ENCODE measurements at regions of chr19 and their contacts with region 1.

Region 1: DNA sequence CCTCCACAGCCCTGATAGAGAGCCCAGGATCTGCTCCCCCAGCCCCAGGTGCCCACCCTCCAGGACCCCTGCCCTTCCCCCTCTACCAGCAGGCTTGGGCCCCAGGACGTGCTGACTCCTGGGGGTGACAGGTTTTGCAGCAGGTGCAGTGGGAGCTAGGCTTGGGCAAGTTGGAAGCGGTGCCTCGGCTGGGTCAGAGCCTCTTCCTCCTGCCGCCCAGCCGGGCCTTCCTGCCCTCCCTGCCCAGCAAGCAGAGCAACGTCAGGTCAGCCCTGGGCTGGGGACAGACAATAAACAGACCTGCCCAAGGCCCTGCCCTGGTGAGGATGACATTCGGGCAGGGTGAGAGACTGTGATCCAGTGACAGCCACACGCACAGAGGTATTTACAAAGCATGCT is 9.2 kb upstream of the NCCRP1 start:
- DNase-seq: no peak
- ATAC-seq: peak; percentile 35 to 45
- H3K4me3 ChIP-seq: no peak overlapping the region
- H3K27ac ChIP-seq: peak overlapping the region in 1 of 2 experiments; percentile 31; a peak in 3 of 6 replicates
- H3K4me1 ChIP-seq: peaks cover 11% of the 10 kb centered on the region; the same call in 2 of the 3 replicates
- CTCF ChIP-seq: peak; percentile 21; the same call in 2 of the 3 replicates
- EP300 ChIP-seq: no peak
- POLR2A ChIP-seq: peak; percentile 9; the same call in 1 of the 2 replicates
- RAD21 ChIP-seq: no peak; a peak in 1 of 5 replicates

Region 2: GRCh38 chr19:39138221-39139211 is 49.0 kb before region 1 on chr19:
- CTCF ChIA-PET with region 1: interaction called, 23 read pairs
- POLR2A ChIA-PET with region 1: no interaction called
- DNase-seq: no peak
- ATAC-seq: no peak
- H3K4me3 ChIP-seq: no peak overlapping the region
- H3K27ac ChIP-seq: peak overlapping the region in 1 of 2 experiments; percentile 64; a peak in 3 of 6 replicates
- H3K4me1 ChIP-seq: peaks cover 52% of the 10 kb centered on the region
- CTCF ChIP-seq: no peak
- EP300 ChIP-seq: no peak
- POLR2A ChIP-seq: no peak
- RAD21 ChIP-seq: no peak

Region 3: DNA sequence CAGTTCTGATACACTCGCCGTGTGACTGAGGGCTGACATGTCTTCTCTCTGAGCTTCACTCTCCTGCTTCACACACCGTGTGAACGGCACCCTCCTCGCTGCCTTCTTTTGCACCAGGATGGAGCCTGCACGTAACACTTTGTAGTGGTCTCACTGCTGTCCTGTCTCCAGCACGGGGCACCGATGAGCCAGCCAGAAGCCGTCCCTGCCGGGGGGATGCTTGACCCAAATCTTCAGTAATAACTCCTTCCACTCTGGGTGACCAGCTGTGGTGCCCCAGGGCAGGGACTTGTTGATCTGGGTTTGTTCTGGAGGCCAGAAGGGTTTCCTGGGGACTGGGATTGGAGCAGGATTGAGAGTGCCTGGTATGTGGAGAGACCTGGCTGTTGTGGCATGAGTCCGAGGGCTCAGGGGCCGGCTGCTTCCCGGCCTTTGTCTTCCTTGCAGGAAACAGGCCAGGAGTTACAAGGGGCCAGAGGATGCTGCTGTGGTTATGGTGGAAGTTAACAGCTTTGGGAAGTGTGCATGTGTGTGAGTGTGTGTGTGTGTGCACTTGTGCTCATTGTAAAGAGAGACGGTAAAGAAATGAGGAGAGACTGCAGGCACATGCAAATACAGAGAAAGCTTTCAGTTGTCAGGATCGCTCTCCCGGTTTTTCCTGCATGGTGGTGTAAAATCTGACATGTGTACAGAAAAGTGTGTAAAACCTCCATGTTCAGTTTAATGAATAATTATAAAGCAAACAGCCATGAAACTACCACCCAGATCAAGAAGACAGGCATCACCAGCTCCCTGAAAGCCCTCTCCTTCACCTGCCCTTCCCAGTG is 43.1 kb before region 1 on chr19:
- CTCF ChIA-PET with region 1: interaction called, 23 read pairs
- POLR2A ChIA-PET with region 1: no interaction called
- DNase-seq: no peak
- ATAC-seq: peak; percentile 45 to 65
- H3K4me3 ChIP-seq: no peak overlapping the region
- H3K27ac ChIP-seq: peak overlapping the region in 1 of 2 experiments; percentile 53; a peak in 3 of 6 replicates
- H3K4me1 ChIP-seq: peaks cover 30% of the 10 kb centered on the region
- CTCF ChIP-seq: no peak
- EP300 ChIP-seq: no peak
- POLR2A ChIP-seq: no peak
- RAD21 ChIP-seq: no peak

Region 4: GRCh38 chr19:39150845-39151600 is 36.5 kb before region 1 on chr19:
- CTCF ChIA-PET with region 1: interaction called, 23 read pairs
- POLR2A ChIA-PET with region 1: no interaction called
- DNase-seq: no peak
- ATAC-seq: no peak
- H3K4me3 ChIP-seq: no peak overlapping the region
- H3K27ac ChIP-seq: no peak overlapping the region
- H3K4me1 ChIP-seq: peaks cover 16% of the 10 kb centered on the region
- CTCF ChIP-seq: no peak
- EP300 ChIP-seq: no peak
- POLR2A ChIP-seq: no peak
- RAD21 ChIP-seq: no peak

Region 5: GRCh38 chr19:39166571-39167391 is 20.8 kb before region 1 on chr19:
- CTCF ChIA-PET with region 1: interaction called, 26 read pairs
- POLR2A ChIA-PET with region 1: no interaction called
- DNase-seq: no peak
- ATAC-seq: peak; percentile 17 to 37; a peak in 4 of 6 replicates
- H3K4me3 ChIP-seq: no peak overlapping the region
- H3K27ac ChIP-seq: peak overlapping the region in 1 of 2 experiments; percentile 22; a peak in 2 of 6 replicates
- H3K4me1 ChIP-seq: peaks cover 15% of the 10 kb centered on the region
- CTCF ChIP-seq: no peak
- EP300 ChIP-seq: no peak
- POLR2A ChIP-seq: no peak
- RAD21 ChIP-seq: no peak

Region 6: GRCh38 chr19:39199025-39199424 is 11.5 kb after region 1 on chr19:
- CTCF ChIA-PET with region 1: interaction called, 30 read pairs
- POLR2A ChIA-PET with region 1: no interaction called
- DNase-seq: no peak
- ATAC-seq: peak in 1 of 2 experiments; percentile 40; a peak in 3 of 6 replicates
- H3K4me3 ChIP-seq: no peak overlapping the region
- H3K27ac ChIP-seq: peak overlapping the region in 1 of 2 experiments; percentile 13; a peak in 2 of 6 replicates
- H3K4me1 ChIP-seq: peaks cover 29% of the 10 kb centered on the region
- CTCF ChIP-seq: no peak
- EP300 ChIP-seq: no peak
- POLR2A ChIP-seq: no peak
- RAD21 ChIP-seq: no peak

Region 7: DNA sequence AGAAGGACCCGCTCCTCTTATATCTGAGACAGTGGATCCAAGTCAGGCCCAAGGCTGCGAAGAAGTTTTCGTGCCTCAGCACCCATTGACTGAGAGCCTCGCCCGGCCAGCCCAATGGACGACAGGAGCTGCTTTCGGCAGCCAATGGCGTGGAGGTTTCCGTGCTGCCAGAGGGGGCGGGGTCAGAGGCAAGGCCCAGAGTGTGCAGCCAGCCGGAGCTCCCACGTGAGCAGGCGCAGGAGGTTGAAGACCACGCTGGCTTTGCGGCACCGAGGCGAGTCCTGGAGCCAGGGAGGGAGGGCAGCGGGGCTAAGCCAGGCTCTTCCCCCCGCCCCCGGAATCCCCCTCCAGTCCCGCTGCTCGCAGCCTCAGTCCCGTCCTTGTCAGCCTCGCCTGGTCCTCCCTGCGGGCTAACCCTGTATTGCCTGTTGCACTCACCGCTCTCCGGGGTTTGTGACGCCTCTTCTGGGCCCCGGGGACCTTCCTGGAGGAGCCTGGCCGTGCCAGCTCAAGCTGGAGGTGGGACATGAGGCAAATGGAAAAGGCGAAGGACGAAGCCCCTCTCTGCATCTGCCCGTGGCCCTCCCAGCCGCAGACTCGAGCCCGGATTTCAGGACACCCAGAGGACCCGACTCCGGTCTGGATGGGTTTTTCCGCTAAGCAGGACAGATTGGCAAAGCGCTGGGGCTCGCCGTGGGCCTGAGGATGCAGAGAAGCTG is 59.6 kb after region 1 on chr19:
- CTCF ChIA-PET with region 1: no interaction called
- POLR2A ChIA-PET with region 1: no interaction called
- DNase-seq: no peak
- ATAC-seq: peak in 1 of 2 experiments; percentile 36; a peak in 3 of 6 replicates
- H3K4me3 ChIP-seq: no peak overlapping the region
- H3K27ac ChIP-seq: no peak overlapping the region
- H3K4me1 ChIP-seq: no peaks in the 10 kb centered on the region
- CTCF ChIP-seq: no peak
- EP300 ChIP-seq: no peak
- POLR2A ChIP-seq: no peak
- RAD21 ChIP-seq: no peak

Region 8: GRCh38 chr19:39297654-39298634 is 110.4 kb after region 1 on chr19:
- CTCF ChIA-PET with region 1: interaction called, 10 read pairs
- POLR2A ChIA-PET with region 1: no interaction called
- DNase-seq: no peak
- ATAC-seq: peak; percentile 40 to 48; a peak in 4 of 6 replicates
- H3K4me3 ChIP-seq: no peak overlapping the region
- H3K27ac ChIP-seq: no peak overlapping the region
- H3K4me1 ChIP-seq: no peaks in the 10 kb centered on the region
- CTCF ChIP-seq: no peak
- EP300 ChIP-seq: no peak
- POLR2A ChIP-seq: no peak
- RAD21 ChIP-seq: no peak

Measured in A549 (cell line).